ENCODE measurements at regions of chr2 and their contacts with region 1.

Region 1: GRCh38 chr2:85538486-85539360 is at the start of gene MAT2A:
- DNase-seq: peak; percentile 98
- ATAC-seq: peak; percentile 77
- H3K4me3 Mint-ChIP-seq: peak within 1 kb of the TSS; percentile 97
- H3K27ac Mint-ChIP-seq: peak within 1 kb of the TSS; percentile 99
- H3K4me1 Mint-ChIP-seq: peaks cover 50% of the 10 kb centered on the region
- H3K27me3 Mint-ChIP-seq: no peaks in the 10 kb centered on the region
- CTCF ChIP-seq: peak; percentile 45
- total RNA-seq, gene MAT2A: 208 to 222 TPM (median 208 TPM) in 3 replicates

Region 2: GRCh38 chr2:85390941-85391669 is 147.6 kb before region 1 on chr2:
- CTCF ChIA-PET with region 1: interaction called, 3 read pairs
- POLR2A ChIA-PET with region 1: interaction called, 10 read pairs
- DNase-seq: peak; percentile 94
- ATAC-seq: peak; percentile 89
- H3K4me3 Mint-ChIP-seq: no peak overlapping the region
- H3K27ac Mint-ChIP-seq: no peak overlapping the region
- H3K4me1 Mint-ChIP-seq: peaks cover 22% of the 10 kb centered on the region
- H3K27me3 Mint-ChIP-seq: no peaks in the 10 kb centered on the region
- CTCF ChIP-seq: peak; percentile 72

Region 3: GRCh38 chr2:85420536-85421259 is 118.0 kb before region 1 on chr2:
- CTCF ChIA-PET with region 1: interaction called, 40 read pairs
- POLR2A ChIA-PET with region 1: interaction called, 34 read pairs
- DNase-seq: peak; percentile 95
- ATAC-seq: peak; percentile 63
- H3K4me3 Mint-ChIP-seq: peak overlapping the region; percentile 35
- H3K27ac Mint-ChIP-seq: peak overlapping the region; percentile 61
- H3K4me1 Mint-ChIP-seq: peaks cover 31% of the 10 kb centered on the region
- H3K27me3 Mint-ChIP-seq: no peaks in the 10 kb centered on the region; the same call in 1 of the 2 replicates
- CTCF ChIP-seq: peak; percentile 100

Region 4: DNA sequence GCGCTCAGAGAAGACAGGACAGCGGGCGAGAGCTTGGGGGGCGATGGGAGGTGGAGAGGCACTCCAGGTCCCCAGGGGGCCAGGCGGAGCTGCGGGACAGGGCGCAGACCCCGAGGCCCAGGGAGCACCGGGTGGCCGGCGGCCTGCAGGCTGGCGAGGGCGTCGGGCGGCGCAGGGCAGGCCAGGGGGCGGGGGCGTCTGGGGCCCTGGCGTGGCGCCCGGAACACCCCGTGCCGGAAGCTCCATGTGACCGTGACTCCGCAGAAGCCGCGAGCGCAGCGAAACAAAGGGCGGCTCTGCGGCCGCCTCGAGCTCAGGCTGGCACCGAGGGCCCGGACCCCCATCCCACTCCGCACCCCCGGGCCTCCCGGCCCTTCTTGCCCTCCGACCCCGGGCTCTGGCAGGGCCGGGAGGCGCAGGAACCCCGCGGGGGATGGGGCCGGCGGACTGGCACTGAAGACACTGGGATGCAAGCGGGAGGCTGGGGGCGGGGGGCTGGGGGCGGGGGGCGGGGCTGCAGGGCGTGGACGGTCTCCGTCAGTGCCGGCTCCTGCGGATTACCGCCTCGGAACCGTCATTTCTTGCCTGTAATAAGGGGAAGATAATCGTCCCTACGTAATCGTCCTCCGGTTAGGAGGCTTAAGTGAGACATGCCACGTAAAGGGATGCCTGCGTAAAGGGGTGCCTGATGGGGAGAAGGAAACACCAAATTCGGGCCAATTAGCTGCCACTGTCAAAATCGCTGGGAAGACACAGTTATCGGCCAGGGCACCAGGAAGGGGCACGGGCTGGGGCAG is 101.0 kb before region 1 on chr2:
- CTCF ChIA-PET with region 1: interaction called, 11 read pairs
- POLR2A ChIA-PET with region 1: interaction called, 54 read pairs
- DNase-seq: peak; percentile 65
- ATAC-seq: peak; percentile 41
- H3K4me3 Mint-ChIP-seq: peak overlapping the region; percentile 73
- H3K27ac Mint-ChIP-seq: peak overlapping the region; percentile 90; the same call in 1 of the 2 replicates
- H3K4me1 Mint-ChIP-seq: peaks cover 41% of the 10 kb centered on the region
- H3K27me3 Mint-ChIP-seq: peaks cover 15% of the 10 kb centered on the region
- CTCF ChIP-seq: no peak

Region 5: GRCh38 chr2:85455552-85456090 is 83.1 kb before region 1 on chr2:
- CTCF ChIA-PET with region 1: interaction called, 7 read pairs
- POLR2A ChIA-PET with region 1: interaction called, 12 read pairs
- DNase-seq: peak; percentile 38
- ATAC-seq: peak; percentile 75
- H3K4me3 Mint-ChIP-seq: no peak overlapping the region
- H3K27ac Mint-ChIP-seq: no peak overlapping the region
- H3K4me1 Mint-ChIP-seq: peaks cover 47% of the 10 kb centered on the region
- H3K27me3 Mint-ChIP-seq: peaks cover 35% of the 10 kb centered on the region
- CTCF ChIP-seq: no peak

Region 6: DNA sequence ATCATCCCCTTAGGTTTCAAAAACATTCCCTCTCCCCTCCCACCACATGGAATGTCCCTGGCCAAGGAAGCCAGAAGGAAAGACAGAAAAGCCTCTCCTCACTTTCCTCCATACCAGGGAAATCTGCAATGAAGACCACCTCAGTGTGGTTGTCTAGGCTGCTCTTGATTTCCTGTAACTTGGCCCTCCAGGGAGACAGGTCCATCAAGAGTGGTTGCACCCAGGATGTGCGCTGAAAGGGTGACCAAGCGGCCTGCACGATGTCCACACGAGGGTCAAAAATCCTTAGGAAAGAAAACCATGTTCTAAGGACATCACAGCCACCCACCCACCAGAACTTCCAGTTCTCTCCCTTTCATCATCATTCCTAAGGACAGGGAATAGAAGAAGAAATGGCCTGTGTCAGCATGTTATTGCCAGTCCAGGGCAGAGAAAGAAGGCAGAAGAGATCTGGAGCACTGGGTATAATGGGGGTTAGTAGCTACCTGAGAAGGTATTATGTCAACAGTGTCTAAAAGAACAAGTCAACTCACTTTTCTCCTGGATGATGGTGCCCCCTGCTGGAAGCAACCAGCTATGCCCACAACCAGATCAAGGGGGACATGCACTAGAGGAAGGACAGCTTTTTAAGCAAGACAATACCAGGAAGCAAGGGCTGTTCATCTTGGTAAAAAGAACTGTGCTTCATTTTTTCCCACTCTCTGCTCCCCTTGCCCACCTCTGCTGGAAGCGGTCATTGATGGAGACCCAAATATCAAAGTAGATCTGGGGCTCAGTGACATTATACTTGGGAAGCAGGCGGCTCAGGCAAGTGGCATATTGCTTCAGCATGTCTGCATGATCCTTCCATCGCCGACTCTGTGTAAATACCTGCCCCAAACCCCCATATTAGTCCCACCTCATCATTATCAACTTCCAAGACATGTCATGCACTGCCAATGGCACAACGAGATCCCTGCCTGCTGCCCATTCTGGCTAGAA is 13.3 kb after region 1 on chr2:
- CTCF ChIA-PET with region 1: interaction called, 20 read pairs
- POLR2A ChIA-PET with region 1: interaction called, 17 read pairs
- DNase-seq: peak; percentile 91
- ATAC-seq: peak; percentile 77
- H3K4me3 Mint-ChIP-seq: no peak overlapping the region
- H3K27ac Mint-ChIP-seq: no peak overlapping the region
- H3K4me1 Mint-ChIP-seq: peaks cover 5% of the 10 kb centered on the region
- H3K27me3 Mint-ChIP-seq: no peaks in the 10 kb centered on the region
- CTCF ChIP-seq: peak; percentile 88